ENCODE measurements at regions of chr11 and their contacts with region 1.

Region 1: DNA sequence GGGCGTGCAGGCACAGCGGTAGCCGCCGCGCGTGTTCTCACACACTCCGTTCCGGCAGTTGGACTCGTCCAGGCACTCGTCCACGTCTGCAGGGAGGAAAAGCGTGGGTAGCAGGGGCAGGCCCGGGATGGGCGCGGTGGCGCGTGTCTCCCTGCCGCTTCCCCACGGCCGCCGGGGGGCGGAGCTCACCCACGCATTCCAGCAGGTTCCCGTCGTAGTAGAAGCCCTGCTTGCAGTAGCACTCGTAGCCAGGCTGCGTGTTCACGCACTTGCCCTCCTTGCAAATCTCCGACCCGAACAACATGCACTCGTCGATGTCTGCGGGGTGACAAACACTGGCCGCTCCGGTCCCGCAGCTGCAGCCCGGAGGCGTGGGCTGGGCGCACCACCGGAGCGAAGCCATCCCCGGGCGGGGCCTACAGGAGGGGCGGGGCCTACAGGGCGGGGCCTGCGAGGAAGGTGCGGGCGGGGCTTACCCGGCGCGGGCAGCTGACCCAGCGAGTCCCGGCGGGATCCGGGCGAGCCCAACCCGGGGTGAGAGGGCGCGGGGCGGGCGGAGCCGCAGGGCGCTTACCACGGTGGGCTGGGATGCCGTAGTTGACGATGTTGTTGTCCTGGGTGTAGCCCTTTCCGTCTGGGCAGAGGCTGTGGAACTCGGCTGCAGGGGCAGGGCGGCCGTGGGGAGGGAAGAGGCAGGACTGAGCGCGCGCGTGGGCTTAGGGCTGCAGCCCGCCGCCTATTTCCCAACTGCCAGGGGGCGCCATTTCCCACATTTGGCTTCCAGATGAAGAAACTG is 15.6 kb downstream of the SCYL1 start:
- DNase-seq: peak; percentile 88 to 96
- H3K4me3 ChIP-seq: peak overlapping the region; percentile 50 to 58
- H3K27ac ChIP-seq: peak overlapping the region; percentile 86 to 91
- H3K4me1 ChIP-seq: peaks cover 0 to 31% (median 23%) of the 10 kb centered on the region in 4 donors
- H3K27me3 ChIP-seq: no peaks in the 10 kb centered on the region
- CTCF ChIP-seq: peak; percentile 87 to 96

Region 2: GRCh38 chr11:65506770-65507505 is 33.6 kb before region 1 on chr11:
- intact Hi-C with region 1: no loop called
- DNase-seq: peak; percentile 64 to 78
- H3K4me3 ChIP-seq: peak overlapping the region; percentile 74 to 86
- H3K27ac ChIP-seq: peak overlapping the region; percentile 99
- H3K4me1 ChIP-seq: peaks cover 0 to 47% (median 14%) of the 10 kb centered on the region in 4 donors
- H3K27me3 ChIP-seq: no peaks in the 10 kb centered on the region
- CTCF ChIP-seq: peak in 1 of 2 experiments; percentile 5

Region 3: GRCh38 chr11:65569973-65570918 is 29.8 kb after region 1 on chr11 and contains the start of gene ZNRD2:
- intact Hi-C with region 1: loop called (anchors 2 kb)
- DNase-seq: peak; percentile 98 to 99
- H3K4me3 ChIP-seq: peak within 1 kb of the TSS; percentile 72 to 96
- H3K27ac ChIP-seq: peak within 1 kb of the TSS; percentile 93 to 98
- H3K4me1 ChIP-seq: peaks cover 0 to 67% (median 56%) of the 10 kb centered on the region in 4 donors
- H3K27me3 ChIP-seq: no peaks in the 10 kb centered on the region
- CTCF ChIP-seq: peak; percentile 38 to 50

Region 4: GRCh38 chr11:65588199-65589054 is 47.9 kb after region 1 on chr11:
- intact Hi-C with region 1: loop called (anchors 5 kb)
- DNase-seq: peak; percentile 60 to 87
- H3K4me3 ChIP-seq: no peak overlapping the region
- H3K27ac ChIP-seq: peak overlapping the region; percentile 68 to 74
- H3K4me1 ChIP-seq: peaks cover 0 to 47% (median 40%) of the 10 kb centered on the region in 4 donors
- H3K27me3 ChIP-seq: no peaks in the 10 kb centered on the region
- CTCF ChIP-seq: peak; percentile 21 to 44

Measured in tibial artery (tissue), 4 donors.